ENCODE measurements at regions of chr7 and their contacts with region 1.

Region 1: GRCh38 chr7:45923290-45923689 is 2.2 kb upstream of the IGFBP3 start:
- DNase-seq: peak; percentile 66 to 97 (median 82)

Region 2: GRCh38 chr7:46233585-46234329 is 310.5 kb after region 1 on chr7:
- intact Hi-C with region 1: no loop called
- DNase-seq: no peak

Region 3: DNA sequence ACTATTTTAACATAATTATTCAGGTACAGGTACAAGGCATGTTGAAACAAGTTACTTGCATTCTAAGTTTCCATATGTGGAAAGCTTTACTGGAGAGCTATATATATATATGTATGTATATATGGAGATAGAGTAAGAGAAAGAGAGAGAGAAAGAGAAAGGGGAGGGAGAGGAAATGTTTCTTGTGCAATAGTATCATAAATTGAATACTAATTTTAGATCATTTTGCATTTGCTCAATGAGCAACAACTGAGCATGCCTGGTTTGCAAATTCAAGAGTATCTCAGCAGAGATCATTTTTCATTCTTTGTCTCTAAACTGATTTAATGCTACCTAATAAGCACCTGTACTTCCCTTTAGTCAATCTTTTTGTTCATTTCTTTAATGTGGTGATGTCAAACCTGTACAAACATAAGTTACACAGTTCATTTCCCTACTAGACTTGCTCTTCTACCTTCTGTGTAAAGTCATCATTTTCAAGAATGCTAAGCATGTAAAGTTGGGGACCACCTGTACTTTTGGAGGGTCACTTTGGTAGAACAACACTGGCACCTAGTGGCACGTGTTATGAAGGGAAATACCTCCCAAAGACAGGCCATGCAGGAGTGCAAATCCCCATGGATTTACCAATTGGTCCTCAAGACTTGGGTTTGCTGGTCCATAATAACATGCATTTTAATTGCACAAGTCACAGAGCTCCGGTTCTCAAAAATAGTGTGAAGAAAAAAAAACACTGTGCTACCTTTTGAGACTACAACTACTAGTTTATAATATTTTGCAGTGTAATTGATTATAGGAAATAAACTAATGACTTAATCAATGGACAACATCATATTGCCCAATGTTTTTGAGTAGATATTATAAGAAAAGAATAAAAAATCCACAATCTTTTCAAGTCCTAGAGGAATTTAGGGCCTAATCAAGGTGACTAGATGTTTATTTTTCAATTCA is 429.0 kb after region 1 on chr7:
- intact Hi-C with region 1: loop called (anchors 2 kb)
- DNase-seq: peak in 3 of 10 donors; percentile 24 to 52 (median 31)

Region 4: GRCh38 chr7:47254081-47255006 is 1331.1 kb after region 1 on chr7:
- intact Hi-C with region 1: loop called (anchors 2 kb)
- DNase-seq: peak; percentile 50 to 95 (median 68)

Measured in posterior cingulate gyrus (tissue), 11 donors.